ENCODE measurements at regions of chr11 and their contacts with region 1.

Region 1: DNA sequence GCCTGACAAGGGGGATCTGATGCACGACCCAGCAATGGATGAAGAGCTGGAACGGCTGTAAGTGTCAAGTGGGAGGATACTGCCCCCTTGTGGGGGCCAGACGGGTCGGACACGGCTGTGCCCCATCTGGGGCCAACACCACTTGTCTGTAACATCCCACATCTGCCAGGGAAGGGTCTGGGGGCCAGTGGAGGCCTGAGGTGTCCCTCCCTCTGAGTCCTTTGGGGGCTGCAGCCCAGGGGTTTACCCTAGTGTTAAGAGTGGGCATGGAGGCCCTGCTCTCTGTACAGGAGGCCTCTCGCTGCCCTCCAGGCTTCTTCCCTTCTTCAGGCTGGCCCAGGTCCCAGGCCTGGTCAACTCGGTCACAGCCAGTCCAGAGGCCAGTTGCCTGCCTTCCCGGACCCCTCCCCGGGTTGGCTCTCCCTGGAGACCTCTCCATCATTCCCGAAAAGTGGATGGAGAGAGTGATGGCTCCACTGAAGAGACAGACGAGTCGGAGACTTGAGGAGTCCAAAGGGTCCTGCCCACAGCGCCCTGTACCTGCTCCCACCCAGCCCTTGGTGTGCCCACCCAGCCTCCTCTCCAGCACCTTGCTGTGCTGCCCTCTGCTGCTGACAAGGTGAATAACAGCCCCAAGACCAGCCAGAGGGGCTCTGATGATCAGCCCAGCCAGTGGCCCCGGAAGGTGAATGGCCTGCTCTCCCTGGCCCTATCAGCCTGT is 15.4 kb downstream of the ARFGAP2 start:
- DNase-seq: peak; percentile 91
- H3K4me3 ChIP-seq: no peak overlapping the region; a peak in 1 of 4 replicates
- H3K27ac ChIP-seq: no peak overlapping the region; a peak in 1 of 4 replicates
- H3K4me1 ChIP-seq: no peaks in the 10 kb centered on the region; a peak in 1 of 4 replicates
- H3K27me3 ChIP-seq: no peaks in the 10 kb centered on the region
- CTCF ChIP-seq: peak; percentile 76
- EP300 ChIP-seq: no peak
- RAD21 ChIP-seq: peak; percentile 82

Region 2: DNA sequence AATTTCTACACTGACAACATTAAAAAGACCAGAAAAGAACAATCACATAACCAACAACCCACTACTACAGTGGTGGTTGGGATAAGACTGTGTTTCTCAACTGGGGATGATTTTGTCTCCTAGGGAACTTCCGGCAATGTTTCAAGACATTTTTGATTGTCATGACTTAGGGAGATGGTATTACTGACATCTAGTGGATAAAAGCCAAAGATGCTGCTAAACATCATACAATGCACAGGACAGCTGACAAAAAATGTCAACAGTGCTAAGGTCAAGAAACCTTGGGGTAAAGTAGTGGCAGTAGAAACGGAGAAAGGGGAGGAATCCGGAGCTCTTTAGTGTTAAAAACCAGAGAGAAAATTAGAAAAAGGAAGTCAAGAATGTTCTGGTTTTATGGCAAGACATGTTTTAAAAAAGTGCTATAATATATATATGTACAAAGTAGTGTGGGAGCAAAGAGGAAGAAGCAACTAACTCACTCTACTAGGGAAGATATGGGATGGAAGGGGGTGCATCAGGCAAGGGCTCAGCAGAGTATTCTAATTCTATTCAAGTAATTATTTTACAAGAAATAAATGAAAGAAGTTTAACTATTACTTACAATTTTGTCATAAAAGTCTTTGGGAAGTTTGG is 352.4 kb before region 1 on chr11:
- CTCF ChIA-PET with region 1: no interaction called
- POLR2A ChIA-PET with region 1: no interaction called
- DNase-seq: peak; percentile 10
- H3K4me3 ChIP-seq: no peak overlapping the region
- H3K27ac ChIP-seq: no peak overlapping the region
- H3K4me1 ChIP-seq: no peaks in the 10 kb centered on the region; a peak in 1 of 4 replicates
- H3K27me3 ChIP-seq: no peaks in the 10 kb centered on the region
- CTCF ChIP-seq: peak; percentile 56
- EP300 ChIP-seq: no peak
- RAD21 ChIP-seq: peak; percentile 28

Region 3: DNA sequence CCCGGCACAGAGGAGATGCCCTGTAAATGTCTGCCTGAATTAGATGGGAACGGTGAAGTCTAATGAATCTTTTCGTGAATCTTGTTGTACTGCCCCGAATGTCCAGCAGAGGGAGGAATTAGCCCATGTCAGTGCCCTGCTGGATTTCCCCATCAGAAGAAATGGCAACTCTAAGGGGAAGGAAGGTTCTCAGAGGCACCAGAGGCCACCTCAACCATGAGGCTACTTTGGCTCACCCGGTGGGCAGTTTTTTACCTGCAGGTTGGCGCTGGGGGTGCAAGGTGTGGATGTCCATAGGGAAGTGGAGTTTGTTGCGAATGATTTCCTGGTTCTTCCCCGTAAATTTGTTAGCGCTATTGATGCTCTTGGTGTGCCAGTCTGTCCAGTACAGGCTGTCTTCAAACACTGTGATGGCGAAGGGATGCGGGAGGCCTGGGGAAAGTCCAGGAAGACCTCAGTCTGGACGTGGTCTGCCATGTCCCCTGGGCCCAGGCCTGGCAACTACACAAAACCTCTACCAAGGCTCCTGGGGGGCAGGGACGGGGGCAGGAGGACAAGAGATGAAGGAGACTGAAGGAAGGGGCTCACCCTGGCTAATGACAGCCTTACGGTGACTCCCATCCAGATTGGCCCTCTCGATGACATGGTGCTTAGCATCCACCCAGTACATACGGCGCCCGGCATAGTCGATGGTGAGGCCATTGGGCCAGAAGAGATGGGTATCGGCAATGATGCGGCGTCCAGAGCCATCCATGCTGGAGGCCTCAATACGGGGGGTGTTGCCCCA is 271.4 kb before region 1 on chr11:
- CTCF ChIA-PET with region 1: interaction called, 94 read pairs
- POLR2A ChIA-PET with region 1: no interaction called
- DNase-seq: peak; percentile 80
- H3K4me3 ChIP-seq: no peak overlapping the region; a peak in 1 of 4 replicates
- H3K27ac ChIP-seq: no peak overlapping the region
- H3K4me1 ChIP-seq: no peaks in the 10 kb centered on the region
- H3K27me3 ChIP-seq: no peaks in the 10 kb centered on the region
- CTCF ChIP-seq: peak; percentile 86
- EP300 ChIP-seq: no peak
- RAD21 ChIP-seq: peak; percentile 99

Region 4: DNA sequence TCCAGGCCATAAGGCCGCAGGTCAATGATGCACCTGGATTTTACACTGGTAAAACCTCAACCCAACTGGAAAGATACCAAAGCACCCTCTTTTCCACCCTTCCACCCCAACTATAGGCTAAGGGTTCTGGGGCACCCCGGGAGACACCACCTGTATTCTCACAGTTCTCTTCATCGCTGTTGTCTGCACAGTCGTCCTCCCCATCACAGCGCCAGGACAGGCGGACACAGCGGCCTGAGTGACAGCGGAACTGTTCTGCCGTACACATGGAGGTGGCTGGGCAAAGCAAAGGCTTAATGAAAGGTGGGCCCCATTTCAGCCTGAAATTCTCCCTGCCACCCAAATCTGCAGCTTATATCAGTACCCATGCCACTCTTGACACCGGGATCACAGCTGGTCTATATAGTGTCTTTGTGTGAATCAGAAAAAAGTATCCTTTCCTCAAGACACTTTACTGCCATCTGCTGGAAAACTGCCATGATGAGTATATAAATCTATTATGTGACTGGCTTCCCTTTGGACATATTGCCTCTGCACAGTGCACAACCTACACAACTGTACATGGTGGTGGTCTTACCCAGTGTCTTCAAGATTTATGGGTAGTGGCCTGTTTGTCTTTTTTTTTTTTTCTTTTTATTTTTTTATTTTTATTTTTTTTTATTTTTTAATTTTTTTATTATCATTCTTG is 264.4 kb before region 1 on chr11:
- CTCF ChIA-PET with region 1: interaction called, 94 read pairs
- POLR2A ChIA-PET with region 1: no interaction called
- DNase-seq: peak; percentile 63
- H3K4me3 ChIP-seq: no peak overlapping the region
- H3K27ac ChIP-seq: no peak overlapping the region
- H3K4me1 ChIP-seq: no peaks in the 10 kb centered on the region
- H3K27me3 ChIP-seq: no peaks in the 10 kb centered on the region
- CTCF ChIP-seq: peak; percentile 50
- EP300 ChIP-seq: no peak
- RAD21 ChIP-seq: peak; percentile 20; the same call in 1 of the 2 replicates

Region 5: GRCh38 chr11:46916286-46917108 is 244.8 kb before region 1 on chr11:
- CTCF ChIA-PET with region 1: interaction called, 170 read pairs
- POLR2A ChIA-PET with region 1: no interaction called
- DNase-seq: peak; percentile 81
- H3K4me3 ChIP-seq: peak overlapping the region; percentile 71 to 73
- H3K27ac ChIP-seq: peak overlapping the region; percentile 74 to 80; a peak in 3 of 4 replicates
- H3K4me1 ChIP-seq: peaks cover 38 to 49% of the 10 kb centered on the region in 2 experiments; a peak in 3 of 4 replicates
- H3K27me3 ChIP-seq: no peaks in the 10 kb centered on the region
- CTCF ChIP-seq: peak; percentile 51
- EP300 ChIP-seq: 0 out of 4 replicates have a peak, but pooled peaks of 1 of the 2 experiments have one; percentile 6
- RAD21 ChIP-seq: no peak

Region 6: GRCh38 chr11:47020793-47021526 is 140.3 kb before region 1 on chr11:
- CTCF ChIA-PET with region 1: no interaction called
- POLR2A ChIA-PET with region 1: no interaction called
- DNase-seq: no peak
- H3K4me3 ChIP-seq: no peak overlapping the region
- H3K27ac ChIP-seq: no peak overlapping the region; a peak in 1 of 4 replicates
- H3K4me1 ChIP-seq: peaks cover 2 to 14% of the 10 kb centered on the region in 2 experiments; a peak in 2 of 4 replicates
- H3K27me3 ChIP-seq: no peaks in the 10 kb centered on the region
- CTCF ChIP-seq: no peak
- EP300 ChIP-seq: no peak
- RAD21 ChIP-seq: no peak

Region 7: GRCh38 chr11:47259178-47259977 is 98.1 kb after region 1 on chr11:
- CTCF ChIA-PET with region 1: interaction called, 10 read pairs
- POLR2A ChIA-PET with region 1: no interaction called
- DNase-seq: peak; percentile 74
- H3K4me3 ChIP-seq: no peak overlapping the region
- H3K27ac ChIP-seq: no peak overlapping the region
- H3K4me1 ChIP-seq: peaks cover 17 to 20% of the 10 kb centered on the region in 2 experiments; a peak in 3 of 4 replicates
- H3K27me3 ChIP-seq: no peaks in the 10 kb centered on the region
- CTCF ChIP-seq: peak; percentile 58
- EP300 ChIP-seq: no peak
- RAD21 ChIP-seq: peak; percentile 73